Colonic mucosa (tissue), 4 donors: ENCODE measurements at regions of chr18 and their contacts with region 1.

Region 1: DNA sequence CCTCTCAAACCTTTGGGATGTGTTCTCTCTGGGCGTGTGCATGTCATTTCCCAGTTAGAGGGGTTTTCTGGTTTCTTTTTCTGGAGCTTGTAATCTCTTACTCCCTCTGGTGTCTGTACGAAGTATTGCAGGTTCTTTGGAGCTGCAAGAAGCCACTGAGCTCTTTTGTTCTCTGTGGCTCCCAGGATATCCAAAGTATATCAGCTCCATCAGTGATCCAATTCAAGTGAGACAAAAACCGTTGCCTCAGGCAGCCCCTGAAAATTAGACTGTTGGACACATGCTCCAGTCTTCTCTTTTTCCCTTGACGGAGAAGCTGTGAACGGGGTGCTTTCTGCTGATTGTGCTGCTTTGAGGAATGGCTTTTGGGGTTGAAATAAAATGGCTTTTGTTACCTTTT is 59.0 kb upstream of the LDLRAD4 start:
- DNase-seq: no peak
- H3K4me3 ChIP-seq: no peak overlapping the region
- H3K27ac ChIP-seq: no peak overlapping the region
- H3K4me1 ChIP-seq: no peaks in the 10 kb centered on the region
- H3K27me3 ChIP-seq: no peaks in the 10 kb centered on the region
- CTCF ChIP-seq: peak; percentile 80

Region 2: DNA sequence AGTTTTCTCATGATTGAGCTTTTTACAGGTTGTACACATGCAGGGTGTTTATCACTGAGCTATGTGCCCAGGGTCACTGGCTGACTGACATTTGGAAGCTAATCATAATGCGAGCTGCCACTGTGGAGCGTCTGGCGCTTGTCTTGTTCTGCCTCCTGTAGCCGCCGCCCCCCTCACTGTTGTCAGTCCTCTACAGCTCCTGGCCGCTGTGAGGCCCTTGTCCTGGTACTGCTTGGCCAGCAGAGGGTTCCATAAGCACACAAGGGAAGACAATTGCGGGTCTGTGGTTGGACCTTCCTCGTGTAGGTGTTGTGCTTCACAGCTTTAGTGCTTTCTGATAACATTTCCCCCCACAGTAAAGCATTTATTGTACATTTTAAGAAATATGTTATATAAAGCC is 46.6 kb before region 1 on chr18:
- intact Hi-C with region 1: loop called (anchors 2 kb)
- DNase-seq: no peak
- H3K4me3 ChIP-seq: no peak overlapping the region
- H3K27ac ChIP-seq: no peak overlapping the region
- H3K4me1 ChIP-seq: no peaks in the 10 kb centered on the region
- H3K27me3 ChIP-seq: no peaks in the 10 kb centered on the region
- CTCF ChIP-seq: peak; percentile 28